A673 (cell line): ENCODE measurements at regions of chr17 and their contacts with region 1.

Region 1: GRCh38 chr17:81394921-81395599 is at the start of gene BAHCC1:
- DNase-seq: peak; percentile 100
- H3K4me3 ChIP-seq: peak within 1 kb of the TSS; percentile 96
- H3K27ac ChIP-seq: peak within 1 kb of the TSS; percentile 100
- H3K4me1 ChIP-seq: peaks cover 35% of the 10 kb centered on the region
- H3K27me3 ChIP-seq: no peaks in the 10 kb centered on the region
- CTCF ChIP-seq: no peak
- total RNA-seq, gene BAHCC1: 74.2 and 80.6 TPM in 2 replicates

Region 2: DNA sequence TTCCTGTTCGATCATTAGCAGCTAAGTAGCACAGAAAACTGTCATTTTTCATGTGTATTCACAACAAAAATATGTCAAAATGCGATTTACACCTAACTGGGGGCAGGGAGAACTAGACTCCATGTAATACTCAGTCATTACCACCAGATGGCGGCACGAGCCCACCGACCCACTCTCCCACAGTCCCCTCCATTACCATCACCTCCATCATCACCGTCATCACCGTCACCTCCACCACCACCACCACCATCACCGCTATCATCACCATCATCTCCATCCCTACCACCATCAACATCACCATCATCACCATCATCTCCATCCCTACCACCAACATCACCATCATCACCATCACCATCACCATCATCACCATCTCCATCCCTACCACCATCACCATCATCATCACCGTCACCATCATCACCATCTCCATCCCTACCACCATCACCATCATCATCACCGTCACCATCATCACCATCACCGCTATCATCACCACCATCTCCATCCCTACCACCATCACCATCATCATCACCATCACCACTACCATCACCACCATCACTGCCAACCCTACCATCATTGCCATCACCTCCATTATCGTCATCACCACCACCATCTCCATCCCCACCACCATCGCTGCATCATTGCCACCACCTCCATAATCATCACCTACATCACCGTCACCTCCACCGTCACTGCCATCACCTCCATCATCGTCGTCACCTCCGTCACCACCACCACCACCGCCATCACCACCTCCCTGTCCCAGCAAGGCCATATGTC is 141.5 kb before region 1 on chr17:
- CTCF ChIA-PET with region 1: no interaction called
- POLR2A ChIA-PET with region 1: no interaction called
- intact Hi-C with region 1: loop called (anchors 2 kb)
- DNase-seq: peak; percentile 59
- H3K4me3 ChIP-seq: no peak overlapping the region
- H3K27ac ChIP-seq: no peak overlapping the region
- H3K4me1 ChIP-seq: peaks cover 29% of the 10 kb centered on the region
- H3K27me3 ChIP-seq: no peaks in the 10 kb centered on the region
- CTCF ChIP-seq: peak; percentile 82

Region 3: DNA sequence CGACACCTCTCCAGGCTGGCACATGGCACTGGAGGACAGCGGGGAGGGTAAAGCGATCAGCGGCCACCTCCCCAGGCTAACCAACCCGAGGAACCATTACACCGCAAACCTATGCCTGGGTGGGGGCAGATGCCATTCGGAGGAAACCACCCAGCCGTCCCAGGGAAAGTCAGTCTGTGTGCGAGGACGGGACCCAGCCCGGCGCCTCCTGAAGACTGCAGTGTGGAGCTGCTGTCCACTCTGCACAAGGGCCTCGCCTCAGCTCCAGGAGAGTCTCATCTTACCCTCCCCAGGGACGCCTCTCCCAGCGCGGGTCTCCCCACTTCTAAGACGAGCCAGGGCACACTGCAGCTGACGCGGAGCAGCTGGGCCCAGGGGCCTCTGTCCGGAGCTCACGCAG is 107.9 kb before region 1 on chr17:
- CTCF ChIA-PET with region 1: no interaction called
- POLR2A ChIA-PET with region 1: interaction called, 11 read pairs
- intact Hi-C with region 1: loop called (anchors 10 kb)
- DNase-seq: no peak
- H3K4me3 ChIP-seq: no peak overlapping the region
- H3K27ac ChIP-seq: no peak overlapping the region
- H3K4me1 ChIP-seq: no peaks in the 10 kb centered on the region
- H3K27me3 ChIP-seq: no peaks in the 10 kb centered on the region
- CTCF ChIP-seq: no peak

Region 4: DNA sequence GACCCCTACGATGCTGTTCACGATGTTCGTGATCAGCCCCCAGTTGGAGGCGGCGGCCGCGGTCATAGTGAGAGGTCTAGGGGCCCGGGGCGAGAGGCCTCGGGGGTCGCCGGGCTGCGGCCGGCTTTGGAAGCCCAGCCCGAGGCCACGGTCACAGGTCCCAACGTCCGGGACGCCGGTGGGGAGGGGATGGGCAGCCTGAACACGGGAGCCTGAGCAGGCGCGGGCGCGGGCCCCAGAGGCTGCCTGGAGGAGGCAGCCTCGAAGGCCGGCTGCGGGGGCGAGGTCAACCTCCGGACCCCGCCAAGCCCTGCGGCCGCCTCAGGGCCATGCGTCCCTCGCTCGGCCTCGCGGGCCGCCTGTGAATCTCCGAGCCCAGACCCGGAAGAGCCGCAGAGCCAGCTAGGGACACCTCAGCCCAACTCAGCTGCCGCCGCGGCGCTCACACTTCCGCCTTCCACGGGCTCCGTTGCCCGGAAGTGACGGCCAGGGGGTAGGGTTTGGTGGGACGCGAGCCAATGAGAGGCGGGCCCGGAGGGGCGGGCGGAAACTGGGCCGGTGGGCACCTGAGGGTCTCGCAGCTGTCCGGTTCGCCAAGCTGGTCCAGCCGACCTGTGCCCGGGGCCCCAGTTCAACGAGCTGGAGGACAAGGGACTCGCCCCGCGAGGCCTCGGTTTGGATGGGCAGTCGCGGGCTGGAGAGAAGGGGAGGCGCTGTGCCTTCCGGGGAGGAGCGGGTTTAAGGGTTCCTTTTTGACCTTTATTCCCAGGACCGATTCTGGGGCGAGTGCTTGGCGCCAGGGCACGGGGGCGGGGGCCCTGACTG is 100.0 kb before region 1 on chr17 and contains the start of gene SLC38A10:
- CTCF ChIA-PET with region 1: no interaction called
- POLR2A ChIA-PET with region 1: no interaction called
- intact Hi-C with region 1: loop called (anchors 10 kb)
- DNase-seq: peak; percentile 91
- H3K4me3 ChIP-seq: peak within 1 kb of the TSS; percentile 100
- H3K27ac ChIP-seq: peak within 1 kb of the TSS; percentile 92
- H3K4me1 ChIP-seq: peaks cover 7% of the 10 kb centered on the region
- H3K27me3 ChIP-seq: no peaks in the 10 kb centered on the region
- CTCF ChIP-seq: no peak
- total RNA-seq, gene SLC38A10: 75.1 and 77.3 TPM in 2 replicates

Region 5: GRCh38 chr17:81428948-81429774 is 34.1 kb after region 1 on chr17:
- CTCF ChIA-PET with region 1: no interaction called
- POLR2A ChIA-PET with region 1: no interaction called
- intact Hi-C with region 1: no loop called
- DNase-seq: peak; percentile 88
- H3K4me3 ChIP-seq: peak overlapping the region; percentile 21
- H3K27ac ChIP-seq: peak overlapping the region; percentile 65
- H3K4me1 ChIP-seq: peaks cover 39% of the 10 kb centered on the region
- H3K27me3 ChIP-seq: no peaks in the 10 kb centered on the region
- CTCF ChIP-seq: no peak

Region 6: DNA sequence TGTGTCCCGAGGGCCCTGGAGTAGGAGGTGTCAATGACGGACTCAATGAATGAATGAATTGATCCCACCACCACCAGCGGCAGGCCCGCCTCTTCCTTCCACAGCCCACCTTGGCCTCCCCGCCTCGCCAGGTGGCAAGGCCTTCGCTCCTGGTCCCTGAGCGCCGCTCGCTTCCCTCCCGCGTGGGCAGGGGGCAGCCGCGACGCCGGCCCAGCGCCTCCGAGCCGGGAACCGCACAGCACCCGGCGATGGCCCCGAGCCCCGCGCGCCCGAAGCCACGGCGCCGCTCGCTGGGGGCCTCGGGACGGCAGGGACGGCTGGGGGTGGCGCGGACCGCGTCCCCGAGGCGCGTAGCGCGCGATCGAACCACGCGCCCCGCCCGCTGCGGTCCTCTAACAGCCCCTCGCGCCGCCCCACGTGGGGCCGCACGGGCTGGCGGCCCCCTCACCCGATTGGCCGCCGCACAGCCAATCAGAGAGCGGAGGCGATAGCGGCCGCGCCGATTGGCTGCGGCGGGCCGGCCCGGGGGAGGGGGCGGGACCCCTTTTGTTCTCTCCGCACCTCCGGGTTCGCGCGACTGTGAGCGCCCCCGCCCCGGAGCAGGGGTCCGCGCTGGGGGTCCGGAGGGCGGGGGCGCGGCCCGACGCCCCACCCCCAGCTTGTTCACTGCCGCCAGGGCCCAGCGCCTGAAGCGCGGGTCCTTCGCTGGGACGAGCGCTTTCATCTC is 86.2 kb after region 1 on chr17:
- CTCF ChIA-PET with region 1: interaction called, 5 read pairs
- POLR2A ChIA-PET with region 1: no interaction called
- intact Hi-C with region 1: loop called (anchors 2 kb)
- DNase-seq: peak; percentile 94
- H3K4me3 ChIP-seq: peak overlapping the region; percentile 47
- H3K27ac ChIP-seq: peak overlapping the region; percentile 71
- H3K4me1 ChIP-seq: peaks cover 56% of the 10 kb centered on the region
- H3K27me3 ChIP-seq: no peaks in the 10 kb centered on the region
- CTCF ChIP-seq: no peak